ENCODE measurements at regions of chr7 and their contacts with region 1.

Region 1: GRCh38 chr7:155763691-155764437 is 48.4 kb downstream of the SHH start:
- DNase-seq: no peak
- H3K4me3 ChIP-seq: no peak overlapping the region
- H3K27ac ChIP-seq: no peak overlapping the region
- H3K4me1 ChIP-seq: no peaks in the 10 kb centered on the region
- H3K27me3 ChIP-seq: no peaks in the 10 kb centered on the region
- CTCF ChIP-seq: no peak

Region 2: DNA sequence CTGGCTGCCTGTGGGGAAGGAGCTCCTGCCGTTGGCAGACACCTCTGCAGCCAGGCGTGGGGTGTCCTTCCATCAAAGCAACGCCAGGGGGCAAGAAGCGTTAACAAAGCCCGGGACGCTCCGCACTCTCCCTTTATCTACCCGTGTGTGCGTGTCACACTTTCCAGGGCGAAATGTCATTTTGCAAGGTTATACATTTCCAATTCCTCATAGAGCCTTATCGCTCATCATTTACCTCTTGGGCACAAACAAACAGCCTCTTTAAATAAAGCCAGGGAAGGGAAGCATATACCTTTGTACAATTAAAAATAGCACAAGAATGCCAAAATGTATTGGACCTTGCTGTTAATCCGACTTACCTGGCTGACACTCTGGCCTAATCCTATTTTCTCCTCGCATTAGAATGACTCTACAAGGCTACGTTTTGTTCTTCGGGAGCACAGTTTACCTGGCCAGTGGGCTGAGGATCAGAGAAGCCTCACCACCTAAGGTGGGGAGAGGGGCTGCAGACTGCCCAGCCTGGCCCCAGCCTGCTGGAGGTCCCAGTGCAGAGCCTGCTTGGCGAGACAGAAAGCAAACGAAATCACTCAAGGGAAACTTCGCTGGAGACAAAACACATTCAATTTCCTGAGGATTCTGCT is 383.5 kb before region 1 on chr7:
- intact Hi-C with region 1: no loop called
- DNase-seq: peak; percentile 76
- H3K4me3 ChIP-seq: no peak overlapping the region
- H3K27ac ChIP-seq: no peak overlapping the region
- H3K4me1 ChIP-seq: peaks cover 5% of the 10 kb centered on the region
- H3K27me3 ChIP-seq: peaks cover 88% of the 10 kb centered on the region
- CTCF ChIP-seq: peak; percentile 74

Region 3: DNA sequence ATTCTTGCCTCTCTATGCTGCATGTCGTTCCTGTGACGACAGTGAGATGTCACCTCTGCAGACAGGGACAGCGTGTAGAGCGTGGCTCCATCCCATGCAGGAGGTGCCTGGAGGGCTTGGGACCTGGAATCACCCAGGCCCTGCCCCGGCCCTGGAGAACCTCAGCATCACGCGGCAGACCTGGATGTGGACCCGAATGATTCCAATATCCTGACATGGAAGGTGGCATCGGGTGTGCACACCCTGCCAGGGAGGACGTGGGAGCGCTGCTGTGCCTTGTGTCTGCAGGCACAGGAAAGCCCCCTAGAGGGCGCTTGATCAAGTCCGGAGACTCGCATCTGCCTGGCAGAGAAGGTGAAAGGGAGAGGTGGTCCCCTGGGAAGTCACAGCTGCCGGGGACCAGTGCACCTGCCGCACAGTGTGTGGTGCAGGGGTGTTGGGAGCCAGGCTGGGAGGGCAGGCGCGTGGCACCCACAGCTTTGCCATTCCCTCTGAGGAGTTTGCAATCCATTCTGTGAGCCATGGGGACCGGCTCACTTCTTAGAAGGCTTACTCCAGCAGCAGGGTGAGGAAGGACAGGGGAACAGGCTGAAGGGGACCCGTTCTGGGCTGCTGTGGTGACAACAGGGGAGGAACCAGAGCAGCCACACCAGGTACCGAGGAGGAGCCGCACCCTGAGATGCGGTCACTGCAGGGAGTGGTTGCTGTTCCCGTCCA is 351.2 kb before region 1 on chr7:
- intact Hi-C with region 1: loop called (anchors 10 kb)
- DNase-seq: peak; percentile 60
- H3K4me3 ChIP-seq: no peak overlapping the region
- H3K27ac ChIP-seq: no peak overlapping the region
- H3K4me1 ChIP-seq: no peaks in the 10 kb centered on the region
- H3K27me3 ChIP-seq: no peaks in the 10 kb centered on the region
- CTCF ChIP-seq: peak; percentile 65

Region 4: GRCh38 chr7:155598810-155599210 is 165.1 kb before region 1 on chr7:
- intact Hi-C with region 1: loop called (anchors 10 kb)
- DNase-seq: peak; percentile 91
- H3K4me3 ChIP-seq: no peak overlapping the region
- H3K27ac ChIP-seq: no peak overlapping the region
- H3K4me1 ChIP-seq: no peaks in the 10 kb centered on the region
- H3K27me3 ChIP-seq: no peaks in the 10 kb centered on the region
- CTCF ChIP-seq: peak; percentile 98

Measured in colonic mucosa (tissue), 4 donors.